ENCODE measurements at regions of chr3 and their contacts with region 1.

Region 1: GRCh38 chr3:45656575-45657363 is 32.4 kb upstream of the SACM1L start:
- DNase-seq: peak; percentile 93
- H3K4me3 Mint-ChIP-seq: no peak overlapping the region
- H3K27ac Mint-ChIP-seq: no peak overlapping the region
- H3K4me1 Mint-ChIP-seq: peaks cover 18% of the 10 kb centered on the region
- H3K27me3 Mint-ChIP-seq: no peaks in the 10 kb centered on the region
- CTCF ChIP-seq: peak; percentile 68

Region 2: GRCh38 chr3:45037734-45038455 is 618.9 kb before region 1 on chr3:
- CTCF ChIA-PET with region 1: interaction called, 13 read pairs
- intact Hi-C with region 1: loop called (anchors 5 kb)
- DNase-seq: peak; percentile 91
- H3K4me3 Mint-ChIP-seq: peak overlapping the region; percentile 50
- H3K27ac Mint-ChIP-seq: no peak overlapping the region
- H3K4me1 Mint-ChIP-seq: peaks cover 10% of the 10 kb centered on the region
- H3K27me3 Mint-ChIP-seq: peaks cover 22% of the 10 kb centered on the region
- CTCF ChIP-seq: peak; percentile 87

Region 3: GRCh38 chr3:45224824-45225464 is 431.8 kb before region 1 on chr3:
- CTCF ChIA-PET with region 1: interaction called, 12 read pairs
- intact Hi-C with region 1: loop called (anchors 10 kb)
- DNase-seq: peak; percentile 79
- H3K4me3 Mint-ChIP-seq: peak overlapping the region; percentile 75
- H3K27ac Mint-ChIP-seq: no peak overlapping the region
- H3K4me1 Mint-ChIP-seq: no peaks in the 10 kb centered on the region
- H3K27me3 Mint-ChIP-seq: peaks cover 34% of the 10 kb centered on the region
- CTCF ChIP-seq: peak; percentile 37

Region 4: DNA sequence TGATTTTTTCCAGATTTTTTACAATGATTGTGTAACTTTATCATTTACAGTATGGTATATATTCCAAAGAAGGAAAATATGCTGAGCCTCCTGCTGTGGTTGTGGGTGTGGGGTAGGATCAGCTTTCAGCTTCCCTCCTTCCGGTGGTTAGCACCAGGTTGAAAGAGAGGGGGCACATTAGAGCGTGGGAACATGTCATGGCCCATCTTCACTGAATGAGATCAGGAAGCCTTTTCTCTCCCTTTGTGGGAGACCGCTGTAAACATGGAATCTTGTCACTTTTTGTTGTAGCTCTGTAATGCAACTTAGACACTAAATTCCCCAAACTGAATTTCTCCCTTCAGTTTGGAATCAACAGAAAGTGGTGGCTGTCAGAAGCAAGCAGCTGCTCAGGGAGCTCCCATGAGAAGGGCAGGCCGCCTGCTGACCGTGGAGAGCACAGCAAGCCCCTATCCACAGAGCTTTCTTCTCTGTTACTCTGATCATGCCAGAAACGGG is 148.9 kb before region 1 on chr3:
- CTCF ChIA-PET with region 1: interaction called, 5 read pairs
- intact Hi-C with region 1: loop called (anchors 1 kb)
- DNase-seq: no peak
- H3K4me3 Mint-ChIP-seq: no peak overlapping the region
- H3K27ac Mint-ChIP-seq: no peak overlapping the region
- H3K4me1 Mint-ChIP-seq: peaks cover 8% of the 10 kb centered on the region
- H3K27me3 Mint-ChIP-seq: no peaks in the 10 kb centered on the region
- CTCF ChIP-seq: no peak

Region 5: DNA sequence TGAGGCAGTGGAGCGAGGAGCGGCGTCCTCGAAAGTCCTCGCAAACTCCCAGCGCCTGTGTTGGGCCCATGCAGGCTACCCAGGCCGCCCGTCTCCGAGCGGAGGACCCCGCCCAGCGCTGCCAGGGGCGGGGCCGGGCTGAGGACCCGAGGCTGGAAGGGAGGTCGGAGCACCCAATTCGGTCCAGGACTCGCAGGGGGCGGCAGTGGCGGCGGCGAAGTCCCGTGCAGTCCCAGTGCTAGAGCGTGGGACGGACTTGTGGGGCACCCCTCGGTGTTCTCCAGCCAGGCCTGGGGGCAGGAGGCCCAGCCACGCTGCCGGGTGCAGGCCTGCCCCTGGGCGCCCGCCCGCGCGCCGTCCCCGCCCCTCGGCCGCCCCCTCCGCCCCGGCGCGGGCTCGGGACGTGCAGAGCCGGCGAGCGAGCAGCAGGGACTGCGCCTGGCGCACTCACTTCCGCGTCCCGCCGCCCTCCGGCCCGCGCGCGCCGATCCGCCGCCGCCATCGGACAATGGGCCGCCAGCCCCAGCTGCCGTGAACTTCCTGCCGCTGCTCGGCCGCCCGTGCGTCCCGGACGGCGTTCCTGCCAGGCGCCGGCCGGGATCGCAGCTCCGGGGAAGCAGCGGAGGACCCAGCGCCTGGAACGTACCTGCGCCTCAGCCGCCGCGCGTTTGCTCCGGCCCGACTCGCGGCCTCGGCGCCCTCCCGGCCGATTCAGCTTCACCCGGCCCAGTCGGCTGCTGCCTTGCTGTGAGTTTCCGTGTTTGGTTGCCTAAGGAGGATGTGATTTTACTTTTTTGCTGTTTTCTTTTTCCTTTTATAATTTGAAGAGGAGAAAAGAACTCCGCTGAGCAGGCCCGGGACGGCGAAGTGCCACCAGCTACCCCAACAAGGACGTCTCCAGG is 62.8 kb before region 1 on chr3:
- CTCF ChIA-PET with region 1: interaction called, 6 read pairs
- intact Hi-C with region 1: loop called (anchors 1 kb)
- DNase-seq: peak; percentile 83
- H3K4me3 Mint-ChIP-seq: peak overlapping the region; percentile 75
- H3K27ac Mint-ChIP-seq: peak overlapping the region; percentile 58
- H3K4me1 Mint-ChIP-seq: peaks cover 32% of the 10 kb centered on the region
- H3K27me3 Mint-ChIP-seq: peaks cover 14% of the 10 kb centered on the region
- CTCF ChIP-seq: no peak

Region 6: DNA sequence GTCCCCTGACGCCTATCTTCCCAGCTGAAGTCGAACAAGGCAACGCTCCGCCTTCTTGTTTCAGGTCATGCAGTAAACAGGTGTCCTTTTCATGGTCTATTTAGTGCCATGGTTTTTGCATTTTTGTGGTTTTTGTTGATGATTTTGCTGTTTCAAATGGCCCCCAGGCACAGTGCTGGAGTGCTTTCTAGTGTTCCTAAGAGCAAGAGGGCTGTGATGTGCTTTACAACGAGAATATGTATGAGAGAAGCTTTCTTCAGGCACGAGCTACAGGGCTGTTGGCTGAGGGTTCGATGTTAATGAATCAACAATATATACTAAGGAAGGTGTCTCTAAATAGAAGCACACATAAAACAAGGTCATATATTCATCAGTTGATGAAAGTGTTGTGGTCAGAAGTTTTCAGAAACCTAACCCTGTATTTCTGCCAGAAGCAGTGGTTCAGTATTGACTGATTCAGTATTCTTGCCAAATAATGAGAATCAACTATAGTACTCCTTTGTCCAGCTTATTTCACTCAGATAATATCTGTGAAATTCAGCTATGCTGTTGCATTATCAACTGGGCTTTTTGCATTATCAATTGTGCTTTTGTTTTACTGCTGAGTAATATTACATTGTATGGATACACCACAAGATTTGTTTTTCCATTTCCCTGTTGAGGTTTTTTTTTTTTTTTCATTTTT is 43.7 kb before region 1 on chr3:
- CTCF ChIA-PET with region 1: interaction called, 13 read pairs
- intact Hi-C with region 1: no loop called
- DNase-seq: peak; percentile 59
- H3K4me3 Mint-ChIP-seq: peak overlapping the region; percentile 46
- H3K27ac Mint-ChIP-seq: peak overlapping the region; percentile 98
- H3K4me1 Mint-ChIP-seq: peaks cover 70% of the 10 kb centered on the region
- H3K27me3 Mint-ChIP-seq: no peaks in the 10 kb centered on the region
- CTCF ChIP-seq: no peak

Measured in Calu3 (cell line).